ENCODE measurements at regions of chr12 and their contacts with region 1.

Region 1: DNA sequence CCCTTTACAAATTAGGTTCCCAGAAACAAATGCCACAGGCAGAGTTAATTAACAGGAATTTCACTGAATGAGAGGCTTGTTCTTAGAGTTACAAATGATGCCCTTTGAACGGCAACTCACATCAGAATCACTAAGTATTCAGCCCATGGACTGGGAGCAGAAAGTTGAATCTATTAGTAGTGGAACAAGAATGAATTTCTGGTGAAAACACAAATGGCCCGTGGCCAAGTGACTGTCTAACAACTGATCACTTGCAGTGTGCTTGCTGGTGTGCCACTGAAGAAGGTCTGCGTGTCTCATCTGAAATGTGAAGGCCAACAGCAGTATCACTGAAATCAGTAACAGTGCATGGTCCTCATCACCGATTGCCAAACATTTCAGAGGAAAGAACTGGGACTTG is 893.4 kb upstream of the TMEM132C start:
- DNase-seq: no peak
- ATAC-seq: no peak
- H3K4me3 ChIP-seq: no peak overlapping the region
- H3K27ac ChIP-seq: no peak overlapping the region
- H3K4me1 ChIP-seq: no peaks in the 10 kb centered on the region
- H3K27me3 ChIP-seq: no peaks in the 10 kb centered on the region
- CTCF ChIP-seq: no peak
- EP300 ChIP-seq: no peak
- POLR2A ChIP-seq: no peak
- RAD21 ChIP-seq: no peak

Region 2: DNA sequence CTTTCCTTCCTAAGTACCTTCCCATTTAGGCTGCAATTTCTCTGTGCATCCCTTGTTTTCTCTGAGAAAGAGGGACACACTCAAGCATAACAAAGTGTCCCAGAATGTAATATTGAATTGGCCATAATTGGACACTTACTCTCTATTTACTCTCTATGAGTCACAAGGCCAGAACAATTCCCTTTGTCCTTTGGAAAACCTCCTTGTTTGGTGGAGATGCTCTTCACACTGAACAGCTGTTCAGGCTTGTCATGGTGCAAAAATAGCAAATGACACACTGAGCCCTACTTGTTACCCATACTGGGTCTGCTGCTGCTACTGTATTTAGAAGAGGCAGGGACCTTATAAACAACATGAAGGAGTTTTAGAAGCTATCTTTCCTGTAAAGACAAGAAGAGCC is 697.1 kb before region 1 on chr12:
- CTCF ChIA-PET with region 1: no interaction called
- POLR2A ChIA-PET with region 1: no interaction called
- in situ Hi-C with region 1: no loop called
- intact Hi-C with region 1: no loop called
- DNase-seq: no peak
- ATAC-seq: no peak
- H3K4me3 ChIP-seq: no peak overlapping the region
- H3K27ac ChIP-seq: no peak overlapping the region
- H3K4me1 ChIP-seq: no peaks in the 10 kb centered on the region
- H3K27me3 ChIP-seq: no peaks in the 10 kb centered on the region
- CTCF ChIP-seq: no peak
- EP300 ChIP-seq: no peak
- POLR2A ChIP-seq: no peak
- RAD21 ChIP-seq: no peak

Region 3: DNA sequence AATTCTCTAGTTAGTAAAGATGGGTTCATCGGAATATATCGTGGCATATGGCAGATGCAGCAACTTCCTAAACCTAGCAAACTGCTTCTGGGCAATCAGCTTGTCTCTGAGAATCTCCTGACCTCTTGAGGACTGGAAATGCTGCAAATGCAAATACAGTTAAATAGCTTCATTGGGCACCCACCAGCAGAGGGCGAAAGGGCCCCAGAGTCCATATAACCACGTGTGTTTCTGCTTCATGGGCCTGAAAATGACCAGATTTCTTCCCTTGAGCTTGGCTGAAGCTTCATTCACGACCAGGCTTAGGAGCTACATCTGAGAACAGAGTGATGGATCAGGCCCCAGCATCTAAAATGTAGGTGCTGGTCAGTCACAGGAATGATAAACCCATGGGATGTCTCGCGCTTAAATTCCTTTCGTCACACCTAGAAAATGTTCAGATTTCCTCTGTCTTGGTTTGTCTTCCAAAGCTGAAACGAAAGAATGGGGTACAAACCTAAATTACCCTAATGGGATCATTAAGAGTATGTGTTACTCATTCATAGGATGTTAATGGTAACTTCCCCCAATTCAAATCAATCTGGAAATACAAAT is 589.1 kb before region 1 on chr12:
- CTCF ChIA-PET with region 1: no interaction called
- POLR2A ChIA-PET with region 1: no interaction called
- in situ Hi-C with region 1: no loop called
- intact Hi-C with region 1: loop called (anchors 10 kb)
- DNase-seq: peak; percentile 2
- ATAC-seq: peak; percentile 45; the same call in 2 of the 3 replicates
- H3K4me3 ChIP-seq: no peak overlapping the region
- H3K27ac ChIP-seq: no peak overlapping the region
- H3K4me1 ChIP-seq: no peaks in the 10 kb centered on the region
- H3K27me3 ChIP-seq: no peaks in the 10 kb centered on the region
- CTCF ChIP-seq: peak; percentile 33
- EP300 ChIP-seq: no peak
- POLR2A ChIP-seq: no peak
- RAD21 ChIP-seq: no peak

Measured in HepG2 (cell line).